HEK293 (cell line): ENCODE measurements at regions of chr22 and their contacts with region 1.

Region 1: GRCh38 chr22:22959147-22959827 is 71.7 kb downstream of the IGLL5 start:
- H3K4me3 ChIP-seq: no peak overlapping the region
- H3K27ac ChIP-seq: no peak overlapping the region
- H3K4me1 ChIP-seq: no peaks in the 10 kb centered on the region
- CTCF ChIP-seq: peak; percentile 98

Region 2: DNA sequence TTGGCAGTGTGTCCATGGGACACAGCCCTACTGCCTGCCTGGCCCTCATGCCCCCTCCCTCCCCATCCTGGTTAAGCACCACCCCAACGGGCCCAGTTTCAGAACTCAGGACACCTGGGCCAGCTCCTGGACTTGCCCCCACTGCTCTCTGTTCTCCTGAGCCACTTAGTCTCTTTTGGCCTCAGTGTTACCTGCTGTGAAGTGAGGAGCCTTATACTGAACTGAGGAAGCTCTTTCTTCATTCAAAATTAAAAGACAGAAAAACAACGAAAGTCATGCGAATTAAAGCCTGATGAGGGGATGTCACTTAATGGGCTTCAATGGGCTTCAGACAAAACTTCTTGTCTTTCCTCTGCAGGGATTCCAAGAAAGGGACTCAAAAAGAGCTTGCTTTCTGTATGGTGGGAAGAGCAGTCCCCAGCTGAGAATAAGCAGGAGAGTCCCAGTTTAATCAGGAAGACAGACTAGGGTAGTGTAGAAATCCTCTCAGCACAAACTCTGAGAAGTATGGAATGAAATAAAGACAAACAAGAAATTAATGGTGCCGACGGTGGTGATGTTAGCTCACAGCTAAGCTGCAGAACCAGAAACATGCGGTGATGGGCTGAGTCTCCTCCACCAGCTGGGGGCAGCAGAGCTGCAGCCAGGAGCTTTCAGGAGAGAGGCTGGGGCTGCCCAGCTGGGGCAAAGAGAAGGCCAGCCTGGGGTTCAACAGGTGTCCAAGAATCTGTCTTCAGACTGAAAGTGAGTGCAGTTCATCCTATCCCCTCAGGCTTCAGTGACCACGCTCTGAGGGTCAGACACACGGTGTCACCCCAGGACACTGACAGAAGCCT is 213.8 kb before region 1 on chr22:
- CTCF ChIA-PET with region 1: interaction called, 13 read pairs
- POLR2A ChIA-PET with region 1: no interaction called
- H3K4me3 ChIP-seq: no peak overlapping the region
- H3K27ac ChIP-seq: no peak overlapping the region
- H3K4me1 ChIP-seq: no peaks in the 10 kb centered on the region
- CTCF ChIP-seq: peak; percentile 57; the same call in 1 of the 2 replicates

Region 3: DNA sequence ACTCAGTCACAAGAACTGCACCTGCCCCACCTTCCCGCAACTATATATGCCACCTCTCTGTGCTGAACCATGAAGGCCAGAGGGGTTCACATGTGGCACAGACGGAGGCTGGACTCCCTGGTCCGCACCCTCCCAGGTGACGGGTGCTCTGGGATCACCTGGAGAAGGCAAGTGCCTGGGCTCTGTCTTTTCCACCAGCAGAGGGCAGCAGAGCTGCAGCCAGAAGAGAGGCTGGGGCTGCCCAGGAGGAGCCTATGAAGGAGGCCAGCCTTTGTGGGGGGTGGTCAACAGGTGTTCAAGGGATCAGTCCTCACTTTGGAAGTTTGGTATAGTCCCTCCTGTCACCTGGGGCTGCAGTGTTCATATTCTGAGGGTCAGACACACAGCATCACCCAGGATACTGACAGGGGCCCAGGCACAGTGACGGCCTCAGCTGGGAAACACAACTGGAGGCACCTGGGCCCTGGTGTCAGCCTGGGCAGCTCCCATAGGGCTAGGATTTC is 110.9 kb before region 1 on chr22:
- CTCF ChIA-PET with region 1: interaction called, 76 read pairs
- POLR2A ChIA-PET with region 1: no interaction called
- H3K4me3 ChIP-seq: no peak overlapping the region
- H3K27ac ChIP-seq: no peak overlapping the region
- H3K4me1 ChIP-seq: no peaks in the 10 kb centered on the region
- CTCF ChIP-seq: peak; percentile 81

Region 4: GRCh38 chr22:22942511-22943329 is 16.6 kb before region 1 on chr22:
- CTCF ChIA-PET with region 1: interaction called, 88 read pairs
- POLR2A ChIA-PET with region 1: no interaction called
- H3K4me3 ChIP-seq: no peak overlapping the region
- H3K27ac ChIP-seq: no peak overlapping the region
- H3K4me1 ChIP-seq: no peaks in the 10 kb centered on the region
- CTCF ChIP-seq: peak; percentile 89

Region 5: GRCh38 chr22:23090457-23090835 is 131.2 kb after region 1 on chr22:
- CTCF ChIA-PET with region 1: interaction called, 10 read pairs
- POLR2A ChIA-PET with region 1: no interaction called
- H3K4me3 ChIP-seq: no peak overlapping the region
- H3K27ac ChIP-seq: no peak overlapping the region
- H3K4me1 ChIP-seq: no peaks in the 10 kb centered on the region
- CTCF ChIP-seq: no peak

Region 6: GRCh38 chr22:23144932-23145873 is 185.9 kb after region 1 on chr22 and contains the start of gene RAB36:
- CTCF ChIA-PET with region 1: interaction called, 56 read pairs
- POLR2A ChIA-PET with region 1: no interaction called
- H3K4me3 ChIP-seq: peak within 1 kb of the TSS; percentile 70
- H3K27ac ChIP-seq: peak within 1 kb of the TSS; percentile 19; the same call in 1 of the 2 replicates
- H3K4me1 ChIP-seq: peaks cover 5% of the 10 kb centered on the region; the same call in 1 of the 2 replicates
- CTCF ChIP-seq: no peak